A549 (cell line): ENCODE measurements at regions of chr12 and their contacts with region 1.

Region 1: GRCh38 chr12:57430931-57431720 is at the start of gene R3HDM2:
- DNase-seq: peak; percentile 97 to 98
- ATAC-seq: peak; percentile 96 to 97
- H3K4me3 ChIP-seq: peak within 1 kb of the TSS; percentile 53
- H3K27ac ChIP-seq: peak within 1 kb of the TSS; percentile 96 to 98
- H3K4me1 ChIP-seq: peaks cover 24% of the 10 kb centered on the region; the same call in 2 of the 3 replicates
- CTCF ChIP-seq: no peak
- EP300 ChIP-seq: peak in 1 of 2 experiments; percentile 30; a peak in 1 of 5 replicates
- POLR2A ChIP-seq: peak; percentile 94
- RAD21 ChIP-seq: no peak; a peak in 1 of 5 replicates
- polyA plus RNA-seq, gene R3HDM2: 28.8 and 30.6 TPM in 2 replicates

Region 2: DNA sequence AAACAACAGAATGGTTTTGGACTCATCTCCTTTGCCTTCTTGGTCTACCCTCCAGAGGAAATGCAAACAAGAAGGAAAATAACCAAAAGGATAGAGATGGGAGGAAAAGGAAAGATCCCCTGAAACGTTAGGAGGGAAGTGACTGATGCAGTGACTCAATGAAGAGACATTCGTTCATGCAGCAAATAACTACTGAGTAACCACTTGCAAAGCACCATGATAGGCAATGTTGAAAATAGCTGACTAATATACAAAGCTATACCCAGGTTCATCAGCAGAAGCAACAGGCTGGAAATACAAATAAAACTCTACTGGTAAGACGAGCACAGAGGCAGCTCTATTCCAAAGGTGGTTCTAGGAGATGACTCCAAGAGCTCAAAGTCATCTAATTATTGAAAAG is 42.1 kb before region 1 on chr12:
- CTCF ChIA-PET with region 1: interaction called, 4 read pairs
- POLR2A ChIA-PET with region 1: interaction called, 11 read pairs
- DNase-seq: peak; percentile 76 to 81
- ATAC-seq: peak; percentile 97 to 99
- H3K4me3 ChIP-seq: no peak overlapping the region
- H3K27ac ChIP-seq: peak overlapping the region; percentile 66 to 80
- H3K4me1 ChIP-seq: peaks cover 31% of the 10 kb centered on the region
- CTCF ChIP-seq: no peak
- EP300 ChIP-seq: peak in 1 of 2 experiments; percentile 54; a peak in 1 of 5 replicates
- POLR2A ChIP-seq: no peak
- RAD21 ChIP-seq: 0 out of 5 replicates have a peak, but pooled peaks of 1 of the 2 experiments have one; percentile 25

Region 3: GRCh38 chr12:57416039-57416996 is 14.8 kb before region 1 on chr12:
- CTCF ChIA-PET with region 1: interaction called, 3 read pairs
- POLR2A ChIA-PET with region 1: interaction called, 13 read pairs
- DNase-seq: peak in 1 of 2 experiments; percentile 30
- ATAC-seq: peak in 1 of 2 experiments; percentile 76; a peak in 3 of 6 replicates
- H3K4me3 ChIP-seq: no peak overlapping the region
- H3K27ac ChIP-seq: peak overlapping the region in 1 of 2 experiments; percentile 74; a peak in 3 of 6 replicates
- H3K4me1 ChIP-seq: peaks cover 15% of the 10 kb centered on the region
- CTCF ChIP-seq: no peak
- EP300 ChIP-seq: no peak
- POLR2A ChIP-seq: no peak
- RAD21 ChIP-seq: no peak